Activated naive CD4-positive, alpha-beta T cell treated with anti-CD3 and anti-CD28 coated beads for 36 hours (primary cell): ENCODE measurements at regions of chr2 and their contacts with region 1.

Region 1: DNA sequence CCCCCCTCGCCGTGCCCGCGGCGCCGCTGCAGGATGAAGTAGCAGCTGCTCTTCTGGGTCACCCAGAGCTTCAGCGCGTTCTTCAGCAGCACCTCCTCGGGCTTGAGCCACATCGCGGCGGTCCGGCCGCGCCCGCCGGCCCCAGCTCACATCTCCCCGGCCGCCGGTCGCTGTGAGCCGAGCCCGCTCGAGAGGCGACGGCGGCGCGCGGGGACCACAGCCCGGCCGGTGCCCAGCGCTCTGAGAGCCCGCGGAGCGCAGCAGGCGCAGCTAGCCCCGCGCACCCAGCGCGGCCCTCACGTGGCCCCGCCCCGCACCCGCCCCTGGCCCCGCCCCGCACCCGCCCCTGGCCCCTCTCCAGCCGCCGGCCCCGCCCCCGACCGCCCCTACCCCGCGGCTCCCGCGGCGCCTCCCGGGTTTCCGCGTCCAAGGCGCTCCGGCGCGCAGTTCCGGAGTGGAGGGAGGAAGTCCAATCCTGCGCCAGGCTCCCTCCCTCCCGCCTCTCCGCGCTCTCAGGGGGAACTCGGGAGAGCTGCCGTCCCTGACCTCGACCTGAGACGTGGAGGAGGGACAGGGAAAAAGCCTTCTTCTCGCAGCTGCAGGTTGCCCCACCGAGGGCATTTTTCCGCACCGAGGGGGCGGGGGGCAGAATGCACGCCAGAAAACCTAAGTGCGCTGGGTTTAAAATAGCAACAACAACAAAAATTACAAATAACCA is at the start of gene TBC1D8:
- DNase-seq: peak; percentile 66
- H3K4me3 Mint-ChIP-seq: peak within 1 kb of the TSS; percentile 77
- H3K27ac Mint-ChIP-seq: no peak within 1 kb of the TSS
- H3K4me1 Mint-ChIP-seq: peaks cover 17% of the 10 kb centered on the region
- H3K27me3 Mint-ChIP-seq: peaks cover 19% of the 10 kb centered on the region
- total RNA-seq, gene TBC1D8: 4.0 to 4.5 TPM

Region 2: DNA sequence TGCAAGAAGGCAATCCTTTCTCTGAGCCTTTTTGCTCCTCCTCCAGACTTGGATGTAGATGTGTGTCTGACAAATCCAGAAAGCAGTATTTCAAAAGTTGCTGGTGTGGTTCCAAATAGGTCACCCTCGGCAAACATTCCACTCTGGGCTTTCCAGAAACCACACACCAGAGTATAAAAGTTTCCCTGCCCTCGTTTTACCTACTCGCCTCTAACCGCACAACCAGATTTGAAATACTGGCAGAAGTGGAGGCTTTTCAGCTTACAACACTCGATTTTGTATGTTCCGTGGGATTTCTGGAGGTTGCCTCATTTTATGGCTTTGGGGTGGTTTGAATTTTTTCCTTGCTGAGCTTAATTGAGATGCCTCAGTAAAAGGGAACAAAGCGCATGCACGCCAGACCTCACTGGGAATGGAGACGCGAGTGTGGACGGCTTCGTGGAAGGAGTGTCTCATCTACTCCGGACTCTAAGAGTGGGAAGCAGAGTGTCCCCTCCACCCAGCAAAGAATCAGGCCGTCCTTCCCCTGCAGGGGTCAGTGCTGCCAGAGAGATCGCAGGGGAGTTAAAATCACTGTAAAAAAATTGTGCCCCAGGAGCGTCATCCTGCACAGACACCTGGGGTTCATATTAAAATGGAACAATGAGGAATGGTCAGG is 193.2 kb before region 1 on chr2:
- CTCF ChIA-PET with region 1: no interaction called
- intact Hi-C with region 1: no loop called
- DNase-seq: no peak
- H3K4me3 Mint-ChIP-seq: no peak overlapping the region
- H3K27ac Mint-ChIP-seq: no peak overlapping the region
- H3K4me1 Mint-ChIP-seq: peaks cover 7% of the 10 kb centered on the region
- H3K27me3 Mint-ChIP-seq: no peaks in the 10 kb centered on the region

Region 3: GRCh38 chr2:101001691-101002561 is 149.4 kb before region 1 on chr2 and contains the start of gene RPL31:
- CTCF ChIA-PET with region 1: no interaction called
- intact Hi-C with region 1: loop called (anchors 1 kb)
- DNase-seq: peak; percentile 99
- H3K4me3 Mint-ChIP-seq: peak within 1 kb of the TSS; percentile 99
- H3K27ac Mint-ChIP-seq: peak within 1 kb of the TSS; percentile 94
- H3K4me1 Mint-ChIP-seq: peaks cover 46% of the 10 kb centered on the region
- H3K27me3 Mint-ChIP-seq: no peaks in the 10 kb centered on the region
- total RNA-seq, gene RPL31: 2,225 to 2,255 TPM

Region 4: DNA sequence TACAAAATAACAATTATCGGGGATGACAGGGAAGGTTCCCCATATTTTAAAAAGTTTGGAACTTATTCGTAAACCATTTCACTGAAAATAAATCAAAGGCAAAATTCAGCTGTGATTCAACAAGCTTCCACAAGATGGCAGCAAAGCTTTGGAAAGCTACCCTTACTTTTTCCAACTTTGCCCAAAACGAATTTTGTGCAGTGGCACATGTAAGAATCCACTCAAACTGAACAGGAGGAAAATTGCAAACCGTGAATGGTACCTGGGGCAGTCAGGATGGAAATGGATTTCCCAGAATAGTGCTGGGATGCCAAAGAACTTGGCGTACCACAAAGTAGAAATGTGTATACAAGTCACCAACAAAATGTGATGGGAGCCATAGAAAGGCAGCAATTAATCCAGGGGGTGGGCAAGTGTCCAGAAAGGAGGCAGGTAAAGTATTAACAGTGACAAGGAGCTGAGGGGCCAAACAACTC is 138.6 kb before region 1 on chr2:
- CTCF ChIA-PET with region 1: interaction called, 12 read pairs
- intact Hi-C with region 1: loop called (anchors 1 kb)
- DNase-seq: peak; percentile 44
- H3K4me3 Mint-ChIP-seq: no peak overlapping the region
- H3K27ac Mint-ChIP-seq: no peak overlapping the region
- H3K4me1 Mint-ChIP-seq: peaks cover 35% of the 10 kb centered on the region
- H3K27me3 Mint-ChIP-seq: no peaks in the 10 kb centered on the region

Region 5: GRCh38 chr2:101036562-101037457 is 114.5 kb before region 1 on chr2:
- CTCF ChIA-PET with region 1: interaction called, 18 read pairs
- intact Hi-C with region 1: loop called (anchors 1 kb)
- DNase-seq: no peak
- H3K4me3 Mint-ChIP-seq: no peak overlapping the region
- H3K27ac Mint-ChIP-seq: no peak overlapping the region
- H3K4me1 Mint-ChIP-seq: no peaks in the 10 kb centered on the region
- H3K27me3 Mint-ChIP-seq: no peaks in the 10 kb centered on the region

Region 6: DNA sequence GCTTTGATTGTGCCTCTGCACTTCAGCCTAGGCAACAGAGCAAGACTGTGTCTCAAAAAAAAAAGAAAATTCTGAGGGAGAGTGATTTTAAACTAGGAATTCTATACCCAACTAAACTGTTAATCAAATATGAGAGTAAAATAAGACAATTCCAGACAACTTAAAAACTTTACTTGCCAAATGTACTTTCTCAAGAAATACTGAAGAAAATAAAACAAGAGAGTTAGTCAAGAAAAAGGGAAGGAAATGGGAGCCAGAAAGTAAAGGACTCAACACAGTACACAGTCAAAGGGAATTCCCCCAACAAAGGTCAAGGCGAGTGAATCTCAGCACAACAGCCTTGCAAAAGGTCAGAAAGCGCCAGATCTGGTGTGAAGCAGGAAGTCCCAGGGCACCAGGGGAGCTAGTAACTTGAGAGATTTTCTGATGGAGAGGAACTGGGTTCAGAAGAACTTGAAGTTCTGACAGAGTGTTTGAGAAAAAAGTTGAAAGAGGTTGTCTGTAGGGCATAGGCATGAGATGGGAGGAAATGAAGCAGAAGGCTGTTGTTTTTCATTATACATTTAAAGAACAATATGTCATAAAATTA is 22.5 kb after region 1 on chr2:
- CTCF ChIA-PET with region 1: no interaction called
- intact Hi-C with region 1: loop called (anchors 1 kb)
- DNase-seq: peak; percentile 82
- H3K4me3 Mint-ChIP-seq: no peak overlapping the region
- H3K27ac Mint-ChIP-seq: peak overlapping the region; percentile 87
- H3K4me1 Mint-ChIP-seq: peaks cover 21% of the 10 kb centered on the region
- H3K27me3 Mint-ChIP-seq: no peaks in the 10 kb centered on the region

Region 7: GRCh38 chr2:101252408-101253012 is 101.2 kb after region 1 on chr2 and contains the start of gene CNOT11:
- CTCF ChIA-PET with region 1: no interaction called
- intact Hi-C with region 1: loop called (anchors 1 kb)
- DNase-seq: peak; percentile 99
- H3K4me3 Mint-ChIP-seq: peak within 1 kb of the TSS; percentile 98
- H3K27ac Mint-ChIP-seq: peak within 1 kb of the TSS; percentile 93
- H3K4me1 Mint-ChIP-seq: peaks cover 39% of the 10 kb centered on the region
- H3K27me3 Mint-ChIP-seq: no peaks in the 10 kb centered on the region
- total RNA-seq, gene CNOT11: 38.3 to 40.3 TPM